ENCODE measurements at regions of chr1 and their contacts with region 1.

Region 1: GRCh38 chr1:186618401-186619170 is 61.6 kb downstream of the PTGS2 start:
- DNase-seq: peak; percentile 8 to 53 (median 42)
- ATAC-seq: peak; percentile 81
- H3K4me3 ChIP-seq: peak overlapping the region; percentile 58
- H3K4me3 Mint-ChIP-seq: peak overlapping the region; percentile 71 to 85 (median 80)
- H3K27ac ChIP-seq: no peak overlapping the region
- H3K27ac Mint-ChIP-seq: peak overlapping the region in 8 of 9 donors; percentile 44 to 81 (median 59)
- H3K4me1 ChIP-seq: peaks cover 9 to 25% of the 10 kb centered on the region in 2 donors
- H3K4me1 Mint-ChIP-seq: peaks cover 24 to 56% (median 51%) of the 10 kb centered on the region in 7 donors
- H3K27me3 ChIP-seq: no peaks in the 10 kb centered on the region
- H3K27me3 Mint-ChIP-seq: peaks cover 0 to 30% (median 0%) of the 10 kb centered on the region in 5 donors

Region 2: GRCh38 chr1:184743062-184743756 is 1875.4 kb before region 1 on chr1:
- CTCF ChIA-PET with region 1: no interaction called
- POLR2A ChIA-PET with region 1: no interaction called
- intact Hi-C with region 1: loop called in 1 of 2 experiments (anchors 5 kb)
- DNase-seq: peak in 7 of 9 donors; percentile 68 to 85 (median 79)
- ATAC-seq: peak; percentile 95
- H3K4me3 ChIP-seq: no peak overlapping the region
- H3K4me3 Mint-ChIP-seq: peak overlapping the region; percentile 48 to 86 (median 74)
- H3K27ac ChIP-seq: peak overlapping the region; percentile 55
- H3K27ac Mint-ChIP-seq: peak overlapping the region; percentile 82 to 99 (median 93)
- H3K4me1 ChIP-seq: peaks cover 33 to 37% of the 10 kb centered on the region in 2 donors
- H3K4me1 Mint-ChIP-seq: peaks cover 34 to 82% (median 70%) of the 10 kb centered on the region in 7 donors
- H3K27me3 ChIP-seq: no peaks in the 10 kb centered on the region
- H3K27me3 Mint-ChIP-seq: no peaks in the 10 kb centered on the region

Region 3: GRCh38 chr1:186420923-186421322 is 197.7 kb before region 1 on chr1:
- CTCF ChIA-PET with region 1: no interaction called
- POLR2A ChIA-PET with region 1: no interaction called
- intact Hi-C with region 1: loop called in 1 of 2 experiments (anchors 5 kb)
- DNase-seq: no peak
- ATAC-seq: no peak
- H3K4me3 ChIP-seq: no peak overlapping the region
- H3K4me3 Mint-ChIP-seq: peak overlapping the region in 1 of 10 donors; percentile 75
- H3K27ac ChIP-seq: no peak overlapping the region
- H3K27ac Mint-ChIP-seq: peak overlapping the region in 4 of 9 donors; percentile 7 to 93 (median 30)
- H3K4me1 ChIP-seq: no peaks in the 10 kb centered on the region
- H3K4me1 Mint-ChIP-seq: peaks cover 0 to 28% (median 3%) of the 10 kb centered on the region in 7 donors
- H3K27me3 ChIP-seq: no peaks in the 10 kb centered on the region
- H3K27me3 Mint-ChIP-seq: no peaks in the 10 kb centered on the region

Region 4: GRCh38 chr1:186605762-186606350 is 12.7 kb before region 1 on chr1:
- CTCF ChIA-PET with region 1: no interaction called
- POLR2A ChIA-PET with region 1: no interaction called
- intact Hi-C with region 1: loop called in 1 of 2 experiments (anchors 1 kb)
- DNase-seq: peak in 4 of 9 donors; percentile 6 to 36 (median 18)
- ATAC-seq: peak; percentile 54
- H3K4me3 ChIP-seq: no peak overlapping the region
- H3K4me3 Mint-ChIP-seq: no peak overlapping the region
- H3K27ac ChIP-seq: no peak overlapping the region
- H3K27ac Mint-ChIP-seq: no peak overlapping the region
- H3K4me1 ChIP-seq: no peaks in the 10 kb centered on the region
- H3K4me1 Mint-ChIP-seq: no peaks in the 10 kb centered on the region
- H3K27me3 ChIP-seq: no peaks in the 10 kb centered on the region
- H3K27me3 Mint-ChIP-seq: peaks cover 14 to 64% (median 35%) of the 10 kb centered on the region in 5 donors

Region 5: DNA sequence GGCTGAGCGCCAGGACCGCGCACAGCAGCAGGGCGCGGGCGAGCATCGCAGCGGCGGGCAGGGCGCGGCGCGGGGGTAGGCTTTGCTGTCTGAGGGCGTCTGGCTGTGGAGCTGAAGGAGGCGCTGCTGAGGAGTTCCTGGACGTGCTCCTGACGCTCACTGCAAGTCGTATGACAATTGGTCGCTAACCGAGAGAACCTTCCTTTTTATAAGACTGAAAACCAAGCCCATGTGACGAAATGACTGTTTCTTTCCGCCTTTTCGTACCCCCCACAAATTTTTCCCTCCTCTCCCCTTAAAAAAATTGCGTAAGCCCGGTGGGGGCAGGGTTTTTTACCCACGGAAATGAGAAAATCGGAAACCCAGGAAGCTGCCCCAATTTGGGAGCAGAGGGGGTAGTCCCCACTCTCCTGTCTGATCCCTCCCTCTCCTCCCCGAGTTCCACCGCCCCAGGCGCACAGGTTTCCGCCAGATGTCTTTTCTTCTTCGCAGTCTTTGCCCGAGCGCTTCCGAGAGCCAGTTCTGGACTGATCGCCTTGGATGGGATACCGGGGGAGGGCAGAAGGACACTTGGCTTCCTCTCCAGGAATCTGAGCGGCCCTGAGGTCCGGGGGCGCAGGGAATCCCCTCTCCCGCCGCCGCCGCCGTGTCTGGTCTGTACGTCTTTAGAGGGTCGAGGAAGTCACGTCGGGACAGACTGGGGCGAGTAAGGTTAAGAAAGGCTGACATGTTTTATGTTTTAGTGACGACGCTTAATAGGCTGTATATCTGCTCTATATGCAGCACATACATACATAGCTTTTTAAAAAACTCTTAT is 61.9 kb after region 1 on chr1 and contains the start of gene PTGS2:
- CTCF ChIA-PET with region 1: no interaction called
- POLR2A ChIA-PET with region 1: no interaction called
- intact Hi-C with region 1: loop called in 1 of 2 experiments (anchors 5 kb)
- DNase-seq: peak in 7 of 9 donors; percentile 0 to 49 (median 5)
- ATAC-seq: peak; percentile 94
- H3K4me3 ChIP-seq: no peak within 1 kb of the TSS
- H3K4me3 Mint-ChIP-seq: peak within 1 kb of the TSS; percentile 52 to 86 (median 76)
- H3K27ac ChIP-seq: no peak within 1 kb of the TSS
- H3K27ac Mint-ChIP-seq: no peak within 1 kb of the TSS
- H3K4me1 ChIP-seq: no peaks in the 10 kb centered on the region
- H3K4me1 Mint-ChIP-seq: peaks cover 6 to 22% (median 16%) of the 10 kb centered on the region in 7 donors
- H3K27me3 ChIP-seq: peaks cover 0 to 4% of the 10 kb centered on the region in 2 donors
- H3K27me3 Mint-ChIP-seq: peaks cover 54 to 72% (median 66%) of the 10 kb centered on the region in 5 donors
- total RNA-seq, gene PTGS2: 0.17 to 73.8 (median 21.8) TPM in 3 of 5 experiments, not detected in the others

Region 6: DNA sequence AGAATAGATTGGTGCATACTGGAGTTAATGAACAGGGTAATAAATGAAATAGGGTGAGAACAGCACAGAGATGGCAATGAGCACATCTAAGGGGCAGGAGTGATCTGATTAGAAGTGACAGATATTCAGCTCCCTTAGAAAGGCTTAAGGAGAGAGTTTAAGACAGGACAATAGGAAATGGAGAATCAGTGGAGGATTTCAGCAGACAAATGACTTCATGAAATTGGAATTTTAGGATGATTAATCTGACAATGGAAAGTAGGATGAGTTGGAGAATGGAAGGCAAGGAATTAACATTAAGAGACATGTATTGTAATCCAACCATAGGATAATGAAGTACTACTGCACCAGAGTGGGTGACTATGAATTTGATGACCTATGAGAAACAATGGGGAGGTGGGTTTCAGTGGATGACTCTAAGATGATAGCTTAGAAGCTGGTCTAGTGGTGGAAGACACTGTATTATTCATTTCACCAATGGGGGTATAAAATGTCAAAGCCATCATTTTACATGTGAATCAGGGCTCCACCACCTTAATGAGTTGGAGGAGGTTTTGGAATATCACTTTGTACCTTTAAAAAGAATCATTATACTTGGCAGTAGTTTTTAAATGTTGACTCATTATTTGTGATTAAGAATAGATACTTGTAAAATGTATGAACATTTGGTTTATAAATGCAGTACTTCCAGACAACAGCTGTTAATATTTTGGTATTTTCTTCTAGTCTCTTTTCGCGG is 349.2 kb after region 1 on chr1:
- CTCF ChIA-PET with region 1: no interaction called
- POLR2A ChIA-PET with region 1: no interaction called
- intact Hi-C with region 1: no loop called
- DNase-seq: no peak
- ATAC-seq: no peak
- H3K4me3 ChIP-seq: no peak overlapping the region
- H3K4me3 Mint-ChIP-seq: no peak overlapping the region
- H3K27ac ChIP-seq: no peak overlapping the region
- H3K27ac Mint-ChIP-seq: no peak overlapping the region
- H3K4me1 ChIP-seq: no peaks in the 10 kb centered on the region
- H3K4me1 Mint-ChIP-seq: no peaks in the 10 kb centered on the region
- H3K27me3 ChIP-seq: no peaks in the 10 kb centered on the region
- H3K27me3 Mint-ChIP-seq: peaks cover 0 to 14% (median 6%) of the 10 kb centered on the region in 5 donors